IMR-90 (cell line): ENCODE measurements at regions of chr4 and their contacts with region 1.

Region 1: DNA sequence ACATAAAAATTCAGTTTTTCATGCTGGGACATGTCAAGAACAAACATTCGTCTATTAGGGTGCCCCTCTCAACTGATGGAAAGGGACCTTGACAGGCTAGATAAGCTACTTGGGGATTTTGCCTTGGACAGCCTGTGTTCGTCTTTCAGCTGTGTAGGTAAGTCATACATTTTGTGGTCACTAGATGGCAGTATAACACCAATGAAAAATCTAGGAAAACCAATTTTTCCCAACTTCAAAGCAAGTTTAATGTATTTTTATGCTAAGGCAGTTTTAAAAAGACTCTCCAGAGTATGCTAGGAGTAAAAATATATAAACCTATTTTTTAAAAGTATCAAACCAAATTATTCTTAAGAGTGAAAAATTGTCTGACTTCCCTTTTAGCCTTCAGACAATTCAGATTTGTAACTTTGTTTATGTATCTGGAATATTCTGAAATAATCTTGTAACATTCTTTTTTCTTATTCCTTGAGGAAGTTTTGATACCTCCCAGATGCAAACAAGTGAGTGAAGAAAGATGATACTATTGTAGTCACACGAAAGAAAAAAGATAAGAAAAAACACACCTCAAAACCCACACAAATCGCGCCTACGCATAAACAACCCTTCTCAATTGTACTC is 158.3 kb downstream of the CPE start:
- DNase-seq: peak; percentile 39
- ATAC-seq: peak; percentile 59
- H3K4me3 ChIP-seq: no peak overlapping the region
- H3K27ac ChIP-seq: no peak overlapping the region
- H3K4me1 ChIP-seq: no peaks in the 10 kb centered on the region
- H3K27me3 ChIP-seq: no peaks in the 10 kb centered on the region
- CTCF ChIP-seq: peak; percentile 66
- POLR2A ChIP-seq: no peak
- RAD21 ChIP-seq: peak; percentile 55

Region 2: GRCh38 chr4:164659765-164660164 is 877.4 kb before region 1 on chr4:
- CTCF ChIA-PET with region 1: no interaction called
- POLR2A ChIA-PET with region 1: no interaction called
- dilution Hi-C with region 1: no loop called
- in situ Hi-C with region 1: no loop called
- intact Hi-C with region 1: no loop called
- DNase-seq: no peak
- ATAC-seq: no peak
- H3K4me3 ChIP-seq: no peak overlapping the region
- H3K27ac ChIP-seq: no peak overlapping the region
- H3K4me1 ChIP-seq: no peaks in the 10 kb centered on the region
- H3K27me3 ChIP-seq: no peaks in the 10 kb centered on the region
- CTCF ChIP-seq: no peak
- POLR2A ChIP-seq: no peak
- RAD21 ChIP-seq: no peak

Region 3: GRCh38 chr4:165312506-165312905 is 224.6 kb before region 1 on chr4:
- CTCF ChIA-PET with region 1: no interaction called
- POLR2A ChIA-PET with region 1: no interaction called
- dilution Hi-C with region 1: no loop called
- in situ Hi-C with region 1: no loop called
- intact Hi-C with region 1: no loop called
- DNase-seq: peak; percentile 81
- ATAC-seq: peak; percentile 81
- H3K4me3 ChIP-seq: no peak overlapping the region
- H3K27ac ChIP-seq: no peak overlapping the region
- H3K4me1 ChIP-seq: no peaks in the 10 kb centered on the region
- H3K27me3 ChIP-seq: no peaks in the 10 kb centered on the region
- CTCF ChIP-seq: no peak
- POLR2A ChIP-seq: no peak
- RAD21 ChIP-seq: no peak

Region 4: GRCh38 chr4:166091912-166092510 is 554.9 kb after region 1 on chr4:
- CTCF ChIA-PET with region 1: no interaction called
- POLR2A ChIA-PET with region 1: no interaction called
- dilution Hi-C with region 1: no loop called
- in situ Hi-C with region 1: loop called (anchors 10 kb)
- intact Hi-C with region 1: loop called (anchors 1 kb)
- DNase-seq: peak; percentile 29
- ATAC-seq: peak; percentile 54
- H3K4me3 ChIP-seq: no peak overlapping the region
- H3K27ac ChIP-seq: no peak overlapping the region
- H3K4me1 ChIP-seq: no peaks in the 10 kb centered on the region
- H3K27me3 ChIP-seq: no peaks in the 10 kb centered on the region
- CTCF ChIP-seq: peak; percentile 66
- POLR2A ChIP-seq: no peak
- RAD21 ChIP-seq: peak; percentile 63